ENCODE measurements at regions of chr16 and their contacts with region 1.

Region 1: DNA sequence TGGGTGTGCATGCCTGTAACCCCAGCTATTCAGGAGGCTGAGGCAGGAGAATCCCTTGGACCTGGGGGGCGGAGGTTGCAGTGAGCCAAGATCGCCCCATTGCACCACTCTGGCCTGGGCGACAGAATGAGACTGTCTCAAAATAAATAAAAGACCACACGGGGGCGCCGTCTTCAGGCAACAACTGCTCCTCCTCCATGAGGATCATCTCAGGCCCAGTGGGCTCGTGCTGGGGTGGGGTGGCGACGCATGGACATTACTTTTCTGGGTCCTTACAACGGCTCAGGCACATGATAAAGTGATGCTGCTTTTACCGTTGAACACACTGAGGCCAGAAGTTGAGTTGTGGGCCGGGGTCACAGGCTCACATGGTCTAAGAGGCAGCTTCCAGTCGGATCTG is 56.2 kb downstream of the PRMT7 start:
- DNase-seq: peak; percentile 86
- H3K4me3 Mint-ChIP-seq: no peak overlapping the region
- H3K27ac Mint-ChIP-seq: no peak overlapping the region
- H3K4me1 Mint-ChIP-seq: peaks cover 35% of the 10 kb centered on the region
- H3K27me3 Mint-ChIP-seq: peaks cover 29% of the 10 kb centered on the region

Region 2: DNA sequence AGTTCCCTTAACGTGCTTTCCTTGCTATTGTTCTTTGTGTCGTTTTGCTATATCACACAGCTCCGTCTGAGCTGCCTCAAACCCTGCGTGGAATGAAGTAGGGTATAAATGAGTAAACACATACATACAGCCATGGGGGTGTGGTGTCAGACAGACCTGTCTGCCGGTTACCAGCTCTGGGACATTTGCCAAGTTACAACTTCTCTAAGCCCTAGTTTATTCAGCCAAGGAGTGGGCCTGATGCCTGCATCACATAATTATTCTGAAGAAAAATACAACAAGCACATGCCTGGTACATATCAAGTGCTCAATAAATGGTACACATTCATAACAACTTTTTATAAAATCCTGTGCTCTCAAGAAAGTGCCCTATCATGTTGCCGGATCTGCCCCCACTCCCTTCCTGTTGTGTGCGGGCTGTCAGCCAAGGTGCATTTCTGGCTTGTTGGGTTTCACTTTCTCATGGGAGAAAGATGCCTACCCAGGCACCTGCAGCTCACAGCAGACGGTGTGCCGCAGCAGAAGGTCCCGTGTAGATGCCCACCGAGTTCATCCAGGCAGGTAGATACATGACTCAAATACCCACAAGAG is 50.8 kb after region 1 on chr16:
- intact Hi-C with region 1: loop called (anchors 10 kb)
- DNase-seq: peak; percentile 93
- H3K4me3 Mint-ChIP-seq: peak overlapping the region; percentile 80
- H3K27ac Mint-ChIP-seq: peak overlapping the region; percentile 84
- H3K4me1 Mint-ChIP-seq: peaks cover 31% of the 10 kb centered on the region
- H3K27me3 Mint-ChIP-seq: no peaks in the 10 kb centered on the region

Measured in activated CD4-positive, alpha-beta T cell treated with anti-CD3 and anti-CD28 coated beads, Interleukin-2, amount 10 ng/mL, durations not matched to agents 24 days and 14 days (primary cell).